ENCODE measurements at regions of chr12 and their contacts with region 1.

Region 1: GRCh38 chr12:14845350-14845750 is 2.0 kb upstream of the ART4 start:
- DNase-seq: no peak
- H3K4me3 ChIP-seq: no peak overlapping the region
- H3K27ac ChIP-seq: peak overlapping the region in 2 of 4 donors; percentile 9 to 18
- H3K4me1 ChIP-seq: peaks cover 0 to 39% (median 30%) of the 10 kb centered on the region in 4 donors
- H3K27me3 ChIP-seq: no peaks in the 10 kb centered on the region
- CTCF ChIP-seq: peak; percentile 68 to 91 (median 86)
- EP300 ChIP-seq: no peak
- POLR2A ChIP-seq: no peak

Region 2: GRCh38 chr12:14892726-14893505 is 47.6 kb after region 1 on chr12:
- intact Hi-C with region 1: loop called (anchors 2 kb)
- DNase-seq: peak; percentile 92
- H3K4me3 ChIP-seq: no peak overlapping the region
- H3K27ac ChIP-seq: peak overlapping the region; percentile 55 to 73 (median 67)
- H3K4me1 ChIP-seq: peaks cover 0 to 11% (median 8%) of the 10 kb centered on the region in 4 donors
- H3K27me3 ChIP-seq: no peaks in the 10 kb centered on the region
- CTCF ChIP-seq: no peak
- EP300 ChIP-seq: no peak
- POLR2A ChIP-seq: no peak

Region 3: GRCh38 chr12:15220994-15221885 is 375.9 kb after region 1 on chr12 and contains the start of gene RERG:
- intact Hi-C with region 1: loop called (anchors 2 kb)
- DNase-seq: peak; percentile 91
- H3K4me3 ChIP-seq: peak within 1 kb of the TSS; percentile 55 to 70 (median 61)
- H3K27ac ChIP-seq: peak within 1 kb of the TSS; percentile 78 to 88 (median 86)
- H3K4me1 ChIP-seq: peaks cover 0 to 38% (median 8%) of the 10 kb centered on the region in 4 donors
- H3K27me3 ChIP-seq: no peaks in the 10 kb centered on the region
- CTCF ChIP-seq: peak; percentile 91 to 99 (median 97)
- EP300 ChIP-seq: no peak
- POLR2A ChIP-seq: no peak
- total RNA-seq, gene RERG: 69.9 to 104 (median 78.3) TPM

Region 4: GRCh38 chr12:15268927-15269552 is 423.7 kb after region 1 on chr12:
- intact Hi-C with region 1: loop called (anchors 2 kb)
- DNase-seq: peak; percentile 72
- H3K4me3 ChIP-seq: no peak overlapping the region
- H3K27ac ChIP-seq: peak overlapping the region in 2 of 4 donors; percentile 16 to 36
- H3K4me1 ChIP-seq: peaks cover 0 to 15% (median 10%) of the 10 kb centered on the region in 4 donors
- H3K27me3 ChIP-seq: no peaks in the 10 kb centered on the region
- CTCF ChIP-seq: peak; percentile 78 to 90 (median 84)
- EP300 ChIP-seq: no peak
- POLR2A ChIP-seq: no peak

Region 5: DNA sequence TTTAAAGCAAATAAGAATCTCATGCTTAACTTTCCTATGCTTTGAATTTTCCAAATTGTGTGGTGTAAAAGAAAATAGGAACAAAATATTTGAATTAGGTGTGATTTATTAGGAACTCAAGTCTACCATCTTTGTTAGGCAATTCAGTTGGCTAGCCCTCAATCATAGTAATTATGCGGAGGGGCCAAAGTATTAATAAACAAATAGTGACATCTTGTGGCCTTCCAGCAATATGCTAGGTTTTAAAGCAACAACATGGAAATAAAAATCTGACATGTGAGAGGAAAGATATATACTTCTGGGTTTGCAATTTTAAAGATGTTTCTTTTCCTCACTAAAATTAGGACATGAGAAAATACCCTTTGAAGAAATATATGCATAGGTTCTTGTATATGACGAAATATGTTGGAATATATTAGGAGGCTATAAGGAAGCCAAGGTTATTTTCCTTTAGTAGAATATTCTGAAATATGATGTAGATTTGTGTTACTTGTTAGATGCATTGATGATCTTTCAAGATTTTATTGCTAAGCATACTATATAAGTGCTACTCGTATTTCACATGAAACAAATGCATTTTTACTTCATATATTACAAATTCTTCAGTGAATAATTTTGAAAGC is 677.3 kb after region 1 on chr12:
- intact Hi-C with region 1: loop called (anchors 10 kb)
- DNase-seq: no peak
- H3K4me3 ChIP-seq: no peak overlapping the region
- H3K27ac ChIP-seq: no peak overlapping the region
- H3K4me1 ChIP-seq: no peaks in the 10 kb centered on the region
- H3K27me3 ChIP-seq: no peaks in the 10 kb centered on the region
- CTCF ChIP-seq: peak; percentile 39 to 48 (median 47)
- EP300 ChIP-seq: no peak
- POLR2A ChIP-seq: no peak

Region 6: GRCh38 chr12:15584366-15585041 is 739.2 kb after region 1 on chr12:
- intact Hi-C with region 1: loop called (anchors 10 kb)
- DNase-seq: no peak
- H3K4me3 ChIP-seq: no peak overlapping the region
- H3K27ac ChIP-seq: no peak overlapping the region
- H3K4me1 ChIP-seq: no peaks in the 10 kb centered on the region
- H3K27me3 ChIP-seq: no peaks in the 10 kb centered on the region
- CTCF ChIP-seq: peak in 3 of 4 experiments; percentile 53 to 62 (median 60)
- EP300 ChIP-seq: no peak
- POLR2A ChIP-seq: no peak

Measured in sigmoid colon (tissue), 7 donors.